GM10248 (cell line): ENCODE measurements at regions of chr4 and their contacts with region 1.

Region 1: DNA sequence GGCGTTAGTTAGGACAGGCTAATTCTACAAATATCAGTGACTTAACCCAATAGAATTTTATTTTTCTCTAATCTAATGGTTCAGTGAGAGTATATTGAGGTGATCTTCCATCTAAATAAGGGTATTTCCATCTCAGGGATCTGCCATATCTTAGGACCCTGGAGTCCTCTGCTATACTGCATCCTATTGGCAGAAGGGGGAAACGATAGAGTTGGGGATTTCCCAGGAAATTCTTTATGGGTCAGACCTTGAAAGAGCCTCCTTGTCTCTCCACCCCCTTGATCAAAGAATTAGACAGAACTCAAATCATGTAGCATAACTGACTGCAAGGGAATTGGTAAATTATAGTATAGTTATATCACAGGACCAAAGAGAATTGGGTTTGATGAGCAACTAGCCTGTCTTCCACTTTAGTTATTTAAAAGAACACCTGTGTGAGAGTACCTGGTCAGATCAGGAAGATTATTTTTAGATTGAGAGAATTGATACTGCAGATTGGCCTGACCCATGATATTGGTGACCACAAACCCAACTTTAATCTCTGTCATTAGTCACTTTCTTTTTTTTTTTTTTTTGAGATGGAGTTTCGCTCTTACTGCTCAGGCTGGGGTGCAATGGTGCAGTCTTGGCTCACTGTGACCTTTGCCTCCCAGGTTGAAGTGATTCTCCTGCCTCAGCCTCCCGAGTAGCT is 25.6 kb downstream of the SMARCA5 start:
- DNase-seq: no peak
- CTCF ChIP-seq: no peak

Region 2: GRCh38 chr4:143329985-143330384 is 209.1 kb before region 1 on chr4:
- CTCF ChIA-PET with region 1: no interaction called
- POLR2A ChIA-PET with region 1: no interaction called
- DNase-seq: no peak
- CTCF ChIP-seq: no peak

Region 3: DNA sequence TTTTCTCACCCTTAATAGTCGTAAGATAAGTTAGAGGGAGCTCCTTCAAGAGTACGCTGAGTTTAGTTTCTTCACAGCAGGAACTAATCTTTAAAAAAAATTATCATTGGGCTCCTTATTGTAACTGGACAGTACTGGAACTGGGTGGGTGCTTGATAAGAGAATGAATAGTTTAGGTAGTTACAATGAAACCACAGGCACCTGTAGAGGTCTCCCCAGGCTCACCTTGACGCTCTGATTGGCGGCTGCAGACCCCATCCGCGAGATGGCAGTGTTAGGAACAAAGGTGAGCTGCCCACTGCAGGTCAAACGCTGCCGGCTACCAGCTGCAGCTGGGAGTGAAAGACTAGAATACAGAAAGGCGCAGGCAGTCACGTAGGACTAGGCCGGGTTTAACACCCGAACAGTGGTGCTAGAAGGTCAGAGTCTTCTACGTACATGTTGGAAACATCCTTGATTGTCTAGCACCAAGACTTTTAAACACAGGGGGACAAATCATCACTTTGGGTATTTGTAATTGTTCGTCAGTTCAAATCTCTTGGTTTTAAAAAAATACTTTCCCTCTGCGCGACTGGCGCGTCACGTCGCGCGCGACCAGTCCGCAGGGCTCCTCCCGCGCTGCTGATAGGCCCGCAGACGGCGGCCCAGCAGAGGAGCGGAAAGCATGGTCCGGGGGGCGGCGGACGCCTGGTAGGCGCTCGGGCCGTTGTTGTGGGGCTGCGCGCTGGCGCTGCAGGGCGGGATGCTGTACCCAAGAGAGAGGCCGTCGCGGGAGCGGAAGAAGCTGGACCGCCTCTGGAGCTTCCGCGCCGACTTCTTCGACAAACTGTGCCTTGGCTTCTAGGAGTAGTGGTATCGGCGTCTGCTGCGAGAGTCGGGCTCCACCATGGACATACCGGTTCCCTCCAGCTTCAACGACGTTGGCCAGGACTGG is 20.0 kb after region 1 on chr4:
- CTCF ChIA-PET with region 1: interaction called, 12 read pairs
- POLR2A ChIA-PET with region 1: no interaction called
- DNase-seq: peak; percentile 79
- CTCF ChIP-seq: peak; percentile 79

Region 4: DNA sequence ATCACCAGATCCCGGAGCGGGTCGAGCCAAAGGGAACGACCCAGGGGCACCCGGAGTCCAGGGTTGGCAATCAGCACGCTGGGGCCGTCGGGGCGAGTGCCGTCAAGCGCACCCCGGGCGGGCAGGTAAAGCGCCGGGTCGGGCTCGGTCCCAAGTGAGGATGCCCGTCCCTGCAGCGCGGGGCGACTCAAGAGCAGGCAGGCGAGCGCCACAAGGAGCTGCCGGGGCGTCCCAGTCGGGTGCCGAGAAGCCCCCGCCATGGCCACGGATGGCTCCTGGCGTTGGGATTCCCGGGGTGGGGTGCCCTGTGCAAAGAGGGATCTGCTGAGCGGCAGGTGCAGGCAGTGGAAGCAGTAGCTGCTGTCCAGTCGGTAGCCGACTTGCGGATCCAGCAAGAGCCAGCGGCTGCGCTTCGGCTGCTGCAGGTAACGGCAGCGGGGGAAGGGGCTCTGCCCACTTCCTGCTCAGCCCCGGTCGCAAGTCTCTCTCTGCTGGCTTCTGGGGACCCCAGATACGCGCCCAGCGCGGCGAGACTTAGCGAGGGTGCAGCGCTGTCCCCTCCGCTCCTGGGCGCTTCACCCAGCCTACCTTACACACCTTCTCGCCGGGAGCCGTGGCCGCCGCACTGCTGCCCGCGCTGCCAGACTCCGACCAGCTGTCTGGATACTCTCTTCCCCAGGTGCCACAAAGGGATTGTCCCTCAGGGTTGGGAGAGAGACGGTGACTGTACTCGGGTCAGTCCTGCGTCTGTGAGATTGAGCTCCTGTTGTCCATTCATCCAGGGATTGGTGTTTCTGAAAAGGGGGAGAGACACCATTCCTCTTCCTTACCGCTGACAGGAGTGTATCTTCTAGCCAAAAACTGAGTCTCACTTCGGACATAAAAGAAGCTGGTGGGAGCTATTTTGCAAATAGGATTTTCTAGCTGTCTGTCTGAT is 161.6 kb after region 1 on chr4 and contains the start of gene FREM3:
- CTCF ChIA-PET with region 1: no interaction called
- POLR2A ChIA-PET with region 1: no interaction called
- DNase-seq: peak; percentile 21
- CTCF ChIP-seq: no peak